ENCODE measurements at regions of chr1 and their contacts with region 1.

Region 1: GRCh38 chr1:175717610-175718540 is 25.5 kb downstream of the TNR start:
- DNase-seq: no peak
- ATAC-seq: no peak
- H3K4me3 ChIP-seq: no peak overlapping the region
- H3K4me3 Mint-ChIP-seq: no peak overlapping the region
- H3K27ac ChIP-seq: no peak overlapping the region
- H3K27ac Mint-ChIP-seq: no peak overlapping the region
- H3K4me1 ChIP-seq: no peaks in the 10 kb centered on the region
- H3K4me1 Mint-ChIP-seq: no peaks in the 10 kb centered on the region
- H3K27me3 ChIP-seq: no peaks in the 10 kb centered on the region
- H3K27me3 Mint-ChIP-seq: peaks cover 18% of the 10 kb centered on the region
- CTCF ChIP-seq: no peak

Region 2: DNA sequence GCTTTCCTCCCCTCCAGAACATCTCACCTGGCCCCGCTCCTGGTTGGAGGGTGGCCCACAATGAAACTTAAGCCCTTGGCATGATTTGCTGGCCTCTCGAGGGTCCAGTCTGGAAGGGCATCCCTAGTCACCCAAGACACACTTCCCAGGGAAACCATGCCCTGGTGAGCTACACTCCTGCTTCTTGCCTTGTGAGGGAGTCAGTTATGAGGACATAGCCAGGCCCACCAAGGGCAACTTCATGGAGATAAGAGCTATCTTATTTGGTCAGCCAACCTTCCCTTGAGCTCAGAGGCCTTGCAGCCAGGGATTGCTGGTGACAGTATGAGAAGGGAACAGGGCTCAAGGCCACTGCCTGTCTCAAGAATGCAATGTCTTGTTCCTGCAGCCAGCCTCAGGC is 15.8 kb after region 1 on chr1:
- CTCF ChIA-PET with region 1: no interaction called
- POLR2A ChIA-PET with region 1: no interaction called
- intact Hi-C with region 1: loop called in 1 of 2 experiments (anchors 1 kb)
- DNase-seq: no peak
- ATAC-seq: no peak
- H3K4me3 ChIP-seq: no peak overlapping the region
- H3K4me3 Mint-ChIP-seq: no peak overlapping the region
- H3K27ac ChIP-seq: no peak overlapping the region
- H3K27ac Mint-ChIP-seq: no peak overlapping the region
- H3K4me1 ChIP-seq: no peaks in the 10 kb centered on the region
- H3K4me1 Mint-ChIP-seq: no peaks in the 10 kb centered on the region
- H3K27me3 ChIP-seq: no peaks in the 10 kb centered on the region
- H3K27me3 Mint-ChIP-seq: peaks cover 19% of the 10 kb centered on the region
- CTCF ChIP-seq: no peak